ENCODE measurements at regions of chr6 and their contacts with region 1.

Region 1: DNA sequence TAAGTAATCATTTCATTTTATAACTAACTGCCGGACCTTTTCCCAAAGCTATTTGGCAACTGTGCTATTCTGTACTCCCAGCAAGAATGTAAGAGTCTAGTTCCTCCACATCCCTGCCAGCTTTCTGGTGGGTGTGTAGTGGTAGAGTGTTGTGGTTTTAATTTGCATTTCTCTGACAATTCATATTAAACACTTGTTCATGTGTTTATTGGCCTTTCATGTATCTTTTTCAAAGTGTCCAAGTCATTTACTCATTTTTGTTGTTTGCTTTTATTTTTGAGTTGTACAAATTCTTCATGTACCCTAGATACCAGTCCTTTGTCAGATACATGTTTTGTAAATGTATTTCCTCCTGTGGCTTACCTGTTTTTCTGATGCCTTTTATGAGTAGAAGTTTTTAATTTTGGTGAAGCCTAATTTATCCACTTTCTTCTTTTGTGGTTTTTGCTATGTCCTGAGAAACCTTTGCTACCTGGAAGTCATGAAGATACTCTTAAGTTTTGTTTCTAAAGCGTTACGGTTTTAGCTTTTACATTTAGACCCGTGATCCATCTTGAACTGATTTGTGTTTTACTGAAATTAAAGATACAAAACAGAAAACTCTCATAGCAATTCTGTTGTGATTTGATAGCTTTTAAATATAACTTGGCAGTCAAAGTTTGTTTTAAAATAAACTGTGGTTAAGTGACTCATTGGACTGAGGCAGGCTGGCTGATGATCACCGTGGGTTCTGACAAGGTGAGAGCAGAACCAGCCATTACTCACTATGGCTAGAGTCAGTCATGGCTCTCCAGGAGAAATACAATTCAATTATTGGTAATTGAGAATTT is 8.0 kb downstream of the MYLIP start:
- H3K4me3 ChIP-seq: no peak overlapping the region
- H3K27ac ChIP-seq: no peak overlapping the region
- H3K4me1 ChIP-seq: peaks cover 42% of the 10 kb centered on the region
- CTCF ChIP-seq: no peak

Region 2: GRCh38 chr6:15922510-15923250 is 214.2 kb before region 1 on chr6:
- CTCF ChIA-PET with region 1: no interaction called
- POLR2A ChIA-PET with region 1: no interaction called
- H3K4me3 ChIP-seq: no peak overlapping the region
- H3K27ac ChIP-seq: no peak overlapping the region
- H3K4me1 ChIP-seq: no peaks in the 10 kb centered on the region
- CTCF ChIP-seq: no peak

Region 3: GRCh38 chr6:16058216-16059075 is 78.4 kb before region 1 on chr6:
- CTCF ChIA-PET with region 1: no interaction called
- POLR2A ChIA-PET with region 1: no interaction called
- H3K4me3 ChIP-seq: no peak overlapping the region
- H3K27ac ChIP-seq: no peak overlapping the region
- H3K4me1 ChIP-seq: peaks cover 5% of the 10 kb centered on the region
- CTCF ChIP-seq: no peak

Region 4: DNA sequence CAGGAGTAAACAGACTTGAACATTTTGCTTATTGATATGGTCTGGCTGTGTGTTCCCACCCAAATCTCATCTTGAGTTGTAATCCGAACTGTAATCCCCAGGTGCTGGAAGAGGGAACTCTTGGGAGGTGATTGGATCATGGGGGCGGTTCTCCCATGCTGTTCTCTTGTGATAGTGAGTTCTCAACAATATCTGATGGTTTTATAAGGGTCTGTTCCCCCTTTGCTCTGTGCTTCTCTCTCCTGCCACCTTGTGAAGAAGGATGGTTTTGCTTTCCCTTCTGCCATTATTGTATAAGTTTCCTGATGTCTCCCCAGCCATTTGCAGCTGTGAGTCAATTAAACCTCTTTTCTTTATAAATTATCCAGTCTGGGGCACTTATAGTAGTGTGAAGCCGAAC is 32.0 kb after region 1 on chr6:
- CTCF ChIA-PET with region 1: interaction called, 10 read pairs
- POLR2A ChIA-PET with region 1: interaction called, 4 read pairs
- H3K4me3 ChIP-seq: no peak overlapping the region
- H3K27ac ChIP-seq: no peak overlapping the region
- H3K4me1 ChIP-seq: peaks cover 6% of the 10 kb centered on the region; the same call in 1 of the 2 replicates
- CTCF ChIP-seq: no peak

Measured in HEK293 (cell line).